ENCODE measurements at regions of chrX and their contacts with region 1.

Region 1: DNA sequence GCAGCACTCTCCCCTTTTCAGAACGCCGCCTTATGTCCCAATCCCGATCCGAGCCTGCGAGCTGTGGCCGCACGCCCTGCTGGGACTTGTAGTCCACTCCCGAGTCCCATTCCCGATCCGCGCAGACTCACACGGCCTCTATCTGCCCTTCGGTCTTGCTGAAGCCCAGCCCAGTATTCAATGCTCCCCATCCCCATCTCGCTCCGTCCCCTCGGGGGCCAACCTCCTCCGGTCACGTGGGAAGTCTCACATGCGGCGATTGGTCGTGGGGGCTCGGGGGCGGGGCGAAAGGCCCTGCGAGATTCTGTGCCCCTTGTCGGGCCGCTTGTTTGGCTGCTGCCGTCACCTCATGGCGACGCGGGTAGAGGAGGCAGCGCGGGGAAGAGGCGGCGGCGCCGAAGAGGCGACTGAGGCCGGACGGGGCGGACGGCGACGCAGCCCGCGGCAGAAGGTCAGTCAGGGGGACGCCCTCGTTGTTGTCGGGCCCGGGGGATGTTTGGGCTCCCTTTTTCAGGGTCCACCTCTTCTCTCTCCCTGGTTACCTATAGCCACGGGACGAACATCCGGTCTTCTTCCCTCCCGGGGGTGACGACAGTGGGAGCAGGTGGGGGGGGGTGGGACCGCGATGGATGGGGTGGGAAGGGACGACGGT is at the start of gene TXLNG:
- DNase-seq: peak; percentile 99
- ATAC-seq: peak; percentile 98
- H3K4me3 ChIP-seq: peak within 1 kb of the TSS; percentile 75
- H3K27ac ChIP-seq: peak within 1 kb of the TSS; percentile 73
- H3K4me1 ChIP-seq: no peaks in the 10 kb centered on the region
- H3K27me3 ChIP-seq: no peaks in the 10 kb centered on the region
- CTCF ChIP-seq: no peak
- EP300 ChIP-seq: no peak
- POLR2A ChIP-seq: peak; percentile 96
- RAD21 ChIP-seq: no peak
- polyA plus RNA-seq, gene TXLNG: 9.9 to 13.2 TPM

Region 2: GRCh38 chrX:16719334-16720084 is 66.8 kb before region 1 on chrX and contains the start of gene SYAP1:
- CTCF ChIA-PET with region 1: no interaction called
- POLR2A ChIA-PET with region 1: interaction called, 4 read pairs
- RAD21 ChIA-PET with region 1: interaction called, 3 read pairs
- SMC1A ChIA-PET with region 1: interaction called, 3 read pairs
- in situ Hi-C with region 1: no loop called
- intact Hi-C with region 1: loop called (anchors 2 kb)
- DNase-seq: peak; percentile 78
- ATAC-seq: peak; percentile 95
- H3K4me3 ChIP-seq: peak within 1 kb of the TSS; percentile 87
- H3K27ac ChIP-seq: peak within 1 kb of the TSS; percentile 72
- H3K4me1 ChIP-seq: no peaks in the 10 kb centered on the region
- H3K27me3 ChIP-seq: no peaks in the 10 kb centered on the region
- CTCF ChIP-seq: no peak
- EP300 ChIP-seq: peak; percentile 73 to 86; a peak in 3 of 4 replicates
- POLR2A ChIP-seq: peak; percentile 94
- RAD21 ChIP-seq: no peak
- polyA plus RNA-seq, gene SYAP1: 5.9 to 6.1 TPM

Region 3: DNA sequence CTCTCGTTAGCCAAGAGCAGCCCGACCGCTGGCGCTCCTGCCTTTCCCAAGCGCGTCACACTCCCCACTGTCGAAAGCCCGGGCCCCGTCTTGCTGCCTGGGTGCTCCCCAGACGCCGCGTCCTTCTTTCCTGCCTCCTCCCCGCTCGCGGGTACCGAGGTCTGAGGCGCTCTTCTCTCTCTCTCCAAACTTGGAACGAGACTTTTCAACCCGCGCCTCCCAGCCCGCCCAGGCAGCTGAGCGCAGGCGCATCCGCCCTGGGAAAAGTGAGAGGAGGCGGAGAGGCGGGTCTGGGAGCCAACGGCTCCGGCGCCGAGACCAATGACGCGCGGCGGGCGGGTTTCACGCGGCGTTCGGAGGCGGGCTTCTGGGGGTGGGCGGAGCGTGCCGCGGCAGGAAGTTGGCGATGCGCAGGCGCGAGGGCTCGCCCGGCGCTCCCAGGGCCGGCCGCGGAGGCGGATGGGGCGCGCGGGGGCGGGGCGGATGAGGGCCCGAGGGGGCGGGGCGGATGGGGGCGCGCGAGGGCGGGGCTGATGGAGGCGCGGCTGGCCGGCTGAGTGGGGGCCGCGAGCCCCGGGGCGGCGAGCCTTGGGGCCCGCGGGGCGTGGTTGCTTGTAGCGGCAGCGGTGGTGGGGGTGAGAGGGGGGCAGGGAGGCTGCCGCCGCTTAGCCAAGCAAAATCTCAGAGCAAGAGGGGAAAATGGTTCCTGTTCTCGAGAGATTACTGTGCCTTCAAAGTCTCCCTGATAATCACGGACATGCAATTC is 84.0 kb after region 1 on chrX and contains the start of gene RBBP7:
- CTCF ChIA-PET with region 1: no interaction called
- POLR2A ChIA-PET with region 1: no interaction called
- RAD21 ChIA-PET with region 1: no interaction called
- SMC1A ChIA-PET with region 1: no interaction called
- in situ Hi-C with region 1: no loop called
- intact Hi-C with region 1: loop called (anchors 5 kb)
- DNase-seq: peak; percentile 57
- ATAC-seq: peak; percentile 89
- H3K4me3 ChIP-seq: peak within 1 kb of the TSS; percentile 93
- H3K27ac ChIP-seq: peak within 1 kb of the TSS; percentile 92
- H3K4me1 ChIP-seq: peaks cover 7% of the 10 kb centered on the region
- H3K27me3 ChIP-seq: peaks cover 0 to 6% of the 10 kb centered on the region in 2 experiments; a peak in 1 of 4 replicates
- CTCF ChIP-seq: no peak
- EP300 ChIP-seq: no peak
- POLR2A ChIP-seq: peak; percentile 84
- RAD21 ChIP-seq: no peak
- polyA plus RNA-seq, gene RBBP7: 95.3 to 155 TPM

Measured in GM12878 (cell line).